Naive thymus-derived CD4-positive, alpha-beta T cell (primary cell): ENCODE measurements at regions of chr16 and their contacts with region 1.

Region 1: GRCh38 chr16:2520092-2520783 is at the start of gene AMDHD2:
- DNase-seq: peak; percentile 81 to 90 (median 89)
- ATAC-seq: peak; percentile 75
- H3K4me3 ChIP-seq: peak within 1 kb of the TSS; percentile 55
- H3K4me3 Mint-ChIP-seq: peak within 1 kb of the TSS; percentile 81 to 95 (median 90)
- H3K27ac ChIP-seq: peak within 1 kb of the TSS; percentile 100
- H3K27ac Mint-ChIP-seq: peak within 1 kb of the TSS; percentile 85 to 98 (median 96)
- H3K4me1 ChIP-seq: peaks cover 29 to 51% of the 10 kb centered on the region in 2 donors
- H3K4me1 Mint-ChIP-seq: peaks cover 40 to 76% (median 59%) of the 10 kb centered on the region in 7 donors
- H3K27me3 ChIP-seq: no peaks in the 10 kb centered on the region
- H3K27me3 Mint-ChIP-seq: no peaks in the 10 kb centered on the region
- total RNA-seq, gene AMDHD2: 60.0 to 258 (median 112) TPM

Region 2: GRCh38 chr16:2531767-2532493 is 11.7 kb after region 1 on chr16:
- CTCF ChIA-PET with region 1: interaction called, 3 read pairs
- POLR2A ChIA-PET with region 1: interaction called, 89 read pairs
- intact Hi-C with region 1: loop called (anchors 1 kb)
- DNase-seq: peak; percentile 94 to 97 (median 96)
- ATAC-seq: peak; percentile 93
- H3K4me3 ChIP-seq: peak overlapping the region; percentile 71
- H3K4me3 Mint-ChIP-seq: peak overlapping the region; percentile 84 to 100 (median 96)
- H3K27ac ChIP-seq: peak overlapping the region; percentile 93
- H3K27ac Mint-ChIP-seq: peak overlapping the region; percentile 96 to 100 (median 98)
- H3K4me1 ChIP-seq: peaks cover 5 to 7% of the 10 kb centered on the region in 2 donors
- H3K4me1 Mint-ChIP-seq: peaks cover 0 to 31% (median 20%) of the 10 kb centered on the region in 7 donors
- H3K27me3 ChIP-seq: no peaks in the 10 kb centered on the region
- H3K27me3 Mint-ChIP-seq: no peaks in the 10 kb centered on the region

Region 3: DNA sequence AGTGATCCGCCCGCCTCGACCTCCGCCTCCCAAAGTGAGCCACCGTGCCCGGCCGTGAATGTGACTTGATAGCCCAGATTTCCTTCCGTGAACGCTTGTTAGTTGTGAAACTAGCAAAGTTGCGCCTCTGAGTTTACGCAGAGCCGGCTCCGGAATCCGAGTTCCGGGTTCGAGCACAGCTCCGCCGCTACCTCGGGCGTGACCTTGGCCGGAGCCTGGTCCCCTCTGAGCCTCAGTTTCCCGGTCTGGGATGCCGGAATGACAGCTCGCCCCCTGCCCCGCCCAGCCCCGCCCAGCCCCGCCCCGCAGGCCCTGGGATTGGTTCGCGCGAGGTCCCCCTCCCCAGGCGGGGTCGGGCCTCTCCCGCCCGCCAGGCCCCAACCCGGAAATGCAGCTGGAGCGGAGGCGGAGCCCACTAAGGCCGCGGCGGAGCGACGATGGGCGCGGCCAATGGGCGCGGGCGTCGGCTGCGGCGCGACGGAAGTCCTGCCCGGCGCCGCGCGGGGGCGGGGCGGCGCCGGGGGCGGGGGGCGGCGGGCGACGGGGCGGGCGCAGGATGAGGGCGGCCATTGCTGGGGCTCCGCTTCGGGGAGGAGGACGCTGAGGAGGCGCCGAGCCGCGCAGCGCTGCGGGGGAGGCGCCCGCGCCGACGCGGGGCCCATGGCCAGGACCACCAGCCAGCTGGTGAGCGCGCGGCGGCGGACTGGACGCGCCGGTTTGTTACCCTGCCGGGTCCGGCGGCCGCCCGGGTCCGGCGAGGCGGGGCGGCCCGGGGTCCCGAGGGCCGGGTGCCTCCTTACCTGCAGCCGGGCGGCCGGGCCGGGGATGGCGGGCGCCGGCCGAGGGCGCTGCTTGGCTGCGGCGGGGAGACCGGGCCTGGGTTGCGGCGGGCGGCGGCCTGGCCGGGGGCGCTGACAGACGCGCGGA is 17.5 kb after region 1 on chr16 and contains the start of gene PDPK1:
- CTCF ChIA-PET with region 1: no interaction called
- POLR2A ChIA-PET with region 1: interaction called, 89 read pairs
- intact Hi-C with region 1: loop called (anchors 1 kb)
- DNase-seq: peak; percentile 87 to 97 (median 94)
- ATAC-seq: peak; percentile 92
- H3K4me3 ChIP-seq: peak within 1 kb of the TSS; percentile 57
- H3K4me3 Mint-ChIP-seq: peak within 1 kb of the TSS; percentile 84 to 94 (median 88)
- H3K27ac ChIP-seq: peak within 1 kb of the TSS; percentile 65
- H3K27ac Mint-ChIP-seq: peak within 1 kb of the TSS; percentile 62 to 95 (median 89)
- H3K4me1 ChIP-seq: peaks cover 0 to 14% of the 10 kb centered on the region in 2 donors
- H3K4me1 Mint-ChIP-seq: peaks cover 26 to 53% (median 43%) of the 10 kb centered on the region in 7 donors
- H3K27me3 ChIP-seq: no peaks in the 10 kb centered on the region
- H3K27me3 Mint-ChIP-seq: no peaks in the 10 kb centered on the region
- total RNA-seq, gene PDPK1: 52.2 to 71.5 (median 58.3) TPM

Region 4: GRCh38 chr16:2656985-2657384 is 136.7 kb after region 1 on chr16:
- CTCF ChIA-PET with region 1: no interaction called
- POLR2A ChIA-PET with region 1: no interaction called
- intact Hi-C with region 1: no loop called
- DNase-seq: no peak
- ATAC-seq: no peak
- H3K4me3 ChIP-seq: no peak overlapping the region
- H3K4me3 Mint-ChIP-seq: no peak overlapping the region
- H3K27ac ChIP-seq: no peak overlapping the region
- H3K27ac Mint-ChIP-seq: peak overlapping the region in 1 of 9 donors; percentile 63
- H3K4me1 ChIP-seq: no peaks in the 10 kb centered on the region
- H3K4me1 Mint-ChIP-seq: peaks cover 0 to 22% (median 15%) of the 10 kb centered on the region in 7 donors
- H3K27me3 ChIP-seq: no peaks in the 10 kb centered on the region
- H3K27me3 Mint-ChIP-seq: peaks cover 0 to 6% (median 0%) of the 10 kb centered on the region in 5 donors